MCF 10A (cell line): ENCODE measurements at regions of chr22 and their contacts with region 1.

Region 1: DNA sequence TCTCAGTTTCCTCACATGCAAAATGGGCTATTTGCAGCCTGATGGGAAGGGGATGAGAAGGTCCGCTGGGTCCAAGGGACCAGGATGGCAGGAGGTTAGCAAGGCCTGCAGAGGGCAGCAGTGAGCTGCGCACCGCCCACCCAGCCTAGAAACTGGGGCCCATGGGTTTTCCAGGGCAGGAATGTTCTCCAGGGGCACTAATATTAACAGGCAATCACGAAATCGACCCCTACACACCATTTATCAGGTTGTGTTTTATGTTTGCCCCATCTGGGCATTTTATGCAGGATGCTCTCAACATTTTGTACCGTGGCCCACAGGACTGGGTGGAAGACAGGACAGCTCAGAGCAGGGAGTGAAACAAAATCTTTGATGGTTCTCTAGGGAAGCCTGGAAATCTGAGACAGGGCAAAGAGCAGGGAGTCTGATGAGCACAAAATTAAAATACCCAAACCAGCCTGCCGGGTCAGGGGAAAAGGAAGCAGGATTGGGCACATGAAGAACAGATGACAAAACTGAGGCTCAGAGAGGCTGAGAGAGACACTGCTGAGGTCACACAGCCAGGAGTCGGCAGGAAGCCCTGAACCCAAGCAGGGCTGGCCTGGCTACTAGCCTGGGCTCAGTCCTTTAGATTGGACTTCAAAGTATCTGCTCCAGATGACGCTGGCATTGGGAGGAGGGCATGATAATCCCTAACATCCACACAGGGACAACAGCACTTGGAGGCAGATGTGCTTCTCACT is 1.6 kb upstream of the BCR start:
- DNase-seq: peak; percentile 64
- H3K4me3 Mint-ChIP-seq: peak overlapping the region; percentile 13
- H3K27ac Mint-ChIP-seq: peak overlapping the region; percentile 78
- H3K4me1 Mint-ChIP-seq: peaks cover 40% of the 10 kb centered on the region
- H3K27me3 Mint-ChIP-seq: no peaks in the 10 kb centered on the region
- CTCF ChIP-seq: peak; percentile 98

Region 2: DNA sequence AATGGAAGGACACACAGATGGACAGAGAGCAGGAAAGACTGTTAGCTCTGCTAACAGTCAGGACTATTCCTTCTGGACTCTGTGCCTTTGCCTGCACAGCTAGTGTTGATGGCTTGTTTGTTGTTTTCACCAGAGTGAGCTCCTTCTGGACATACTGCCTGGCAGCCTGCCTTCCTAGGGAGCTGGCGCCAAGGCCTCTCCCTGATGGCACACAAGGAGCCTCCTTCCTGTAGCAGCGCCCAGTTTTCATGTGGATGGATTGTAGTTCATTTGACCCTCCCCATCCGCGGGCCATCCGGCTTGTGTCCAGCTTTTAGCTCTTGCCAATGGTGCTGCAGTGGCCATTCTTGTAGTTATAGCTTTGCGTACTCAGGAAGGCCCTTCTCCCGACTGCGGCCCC is 15.0 kb before region 1 on chr22:
- CTCF ChIA-PET with region 1: interaction called, 11 read pairs
- POLR2A ChIA-PET with region 1: no interaction called
- intact Hi-C with region 1: no loop called
- DNase-seq: peak; percentile 17
- H3K4me3 Mint-ChIP-seq: no peak overlapping the region
- H3K27ac Mint-ChIP-seq: no peak overlapping the region
- H3K4me1 Mint-ChIP-seq: no peaks in the 10 kb centered on the region
- H3K27me3 Mint-ChIP-seq: no peaks in the 10 kb centered on the region
- CTCF ChIP-seq: no peak

Region 3: DNA sequence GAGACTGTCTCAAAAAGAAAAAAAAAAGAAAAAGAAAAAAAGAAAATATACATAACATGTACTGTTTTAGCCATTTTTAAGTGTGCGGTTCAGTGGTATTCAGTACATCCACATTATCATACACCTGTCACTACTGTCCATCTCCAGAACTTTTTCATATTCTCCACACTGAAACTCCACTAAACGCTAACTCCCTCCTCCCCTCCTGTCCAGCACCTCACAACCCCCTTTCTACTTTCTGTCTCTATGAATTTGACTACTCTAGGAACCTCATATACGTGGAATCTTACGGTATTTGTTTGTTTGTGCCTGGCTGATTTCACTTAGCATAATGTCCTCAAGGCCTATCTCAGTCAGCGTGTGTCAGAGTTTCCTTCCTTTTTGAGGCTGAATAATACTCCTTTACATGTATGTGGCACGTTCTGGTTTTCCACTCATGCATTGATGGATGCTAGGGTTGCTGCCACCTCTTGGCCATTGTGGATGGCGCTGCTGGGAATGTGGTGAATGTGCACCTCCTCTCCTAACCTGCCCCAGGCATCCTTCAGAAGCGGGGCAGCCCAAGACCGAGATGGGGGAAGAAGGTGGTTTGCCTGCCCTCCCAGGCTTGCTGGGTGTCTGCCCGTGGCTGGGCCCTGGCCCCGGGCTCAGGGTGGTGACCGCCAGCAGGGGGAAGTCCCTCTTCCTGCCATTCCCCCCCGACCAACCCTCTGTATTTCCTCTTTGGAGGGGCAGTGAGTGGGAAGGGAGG is 62.1 kb after region 1 on chr22:
- CTCF ChIA-PET with region 1: interaction called, 5 read pairs
- POLR2A ChIA-PET with region 1: no interaction called
- intact Hi-C with region 1: loop called (anchors 2 kb)
- DNase-seq: peak; percentile 64
- H3K4me3 Mint-ChIP-seq: no peak overlapping the region
- H3K27ac Mint-ChIP-seq: no peak overlapping the region
- H3K4me1 Mint-ChIP-seq: peaks cover 46% of the 10 kb centered on the region
- H3K27me3 Mint-ChIP-seq: no peaks in the 10 kb centered on the region
- CTCF ChIP-seq: peak; percentile 42

Region 4: GRCh38 chr22:23281406-23282088 is 102.9 kb after region 1 on chr22:
- CTCF ChIA-PET with region 1: interaction called, 77 read pairs
- POLR2A ChIA-PET with region 1: interaction called, 32 read pairs
- intact Hi-C with region 1: loop called (anchors 1 kb)
- DNase-seq: peak; percentile 80
- H3K4me3 Mint-ChIP-seq: peak overlapping the region; percentile 41
- H3K27ac Mint-ChIP-seq: peak overlapping the region; percentile 84
- H3K4me1 Mint-ChIP-seq: peaks cover 25% of the 10 kb centered on the region
- H3K27me3 Mint-ChIP-seq: no peaks in the 10 kb centered on the region
- CTCF ChIP-seq: peak; percentile 95

Region 5: GRCh38 chr22:23385291-23386244 is 206.9 kb after region 1 on chr22:
- CTCF ChIA-PET with region 1: interaction called, 8 read pairs
- POLR2A ChIA-PET with region 1: no interaction called
- intact Hi-C with region 1: loop called (anchors 1 kb)
- DNase-seq: peak; percentile 64
- H3K4me3 Mint-ChIP-seq: no peak overlapping the region
- H3K27ac Mint-ChIP-seq: no peak overlapping the region
- H3K4me1 Mint-ChIP-seq: no peaks in the 10 kb centered on the region
- H3K27me3 Mint-ChIP-seq: peaks cover 10% of the 10 kb centered on the region
- CTCF ChIP-seq: peak; percentile 98